ENCODE measurements at regions of chr6 and their contacts with region 1.

Region 1: GRCh38 chr6:44265007-44265721 is at the start of gene NFKBIE:
- DNase-seq: peak; percentile 93
- H3K4me3 Mint-ChIP-seq: peak within 1 kb of the TSS; percentile 98
- H3K27ac Mint-ChIP-seq: peak within 1 kb of the TSS; percentile 95
- H3K4me1 Mint-ChIP-seq: peaks cover 66% of the 10 kb centered on the region
- H3K27me3 Mint-ChIP-seq: peaks cover 15% of the 10 kb centered on the region
- total RNA-seq, gene NFKBIE: 23.2 and 29.0 TPM in 2 replicates

Region 2: GRCh38 chr6:44172731-44173500 is 92.2 kb before region 1 on chr6:
- intact Hi-C with region 1: loop called (anchors 1 kb)
- DNase-seq: peak; percentile 64
- H3K4me3 Mint-ChIP-seq: no peak overlapping the region
- H3K27ac Mint-ChIP-seq: peak overlapping the region; percentile 45
- H3K4me1 Mint-ChIP-seq: peaks cover 12% of the 10 kb centered on the region
- H3K27me3 Mint-ChIP-seq: peaks cover 7% of the 10 kb centered on the region

Region 3: DNA sequence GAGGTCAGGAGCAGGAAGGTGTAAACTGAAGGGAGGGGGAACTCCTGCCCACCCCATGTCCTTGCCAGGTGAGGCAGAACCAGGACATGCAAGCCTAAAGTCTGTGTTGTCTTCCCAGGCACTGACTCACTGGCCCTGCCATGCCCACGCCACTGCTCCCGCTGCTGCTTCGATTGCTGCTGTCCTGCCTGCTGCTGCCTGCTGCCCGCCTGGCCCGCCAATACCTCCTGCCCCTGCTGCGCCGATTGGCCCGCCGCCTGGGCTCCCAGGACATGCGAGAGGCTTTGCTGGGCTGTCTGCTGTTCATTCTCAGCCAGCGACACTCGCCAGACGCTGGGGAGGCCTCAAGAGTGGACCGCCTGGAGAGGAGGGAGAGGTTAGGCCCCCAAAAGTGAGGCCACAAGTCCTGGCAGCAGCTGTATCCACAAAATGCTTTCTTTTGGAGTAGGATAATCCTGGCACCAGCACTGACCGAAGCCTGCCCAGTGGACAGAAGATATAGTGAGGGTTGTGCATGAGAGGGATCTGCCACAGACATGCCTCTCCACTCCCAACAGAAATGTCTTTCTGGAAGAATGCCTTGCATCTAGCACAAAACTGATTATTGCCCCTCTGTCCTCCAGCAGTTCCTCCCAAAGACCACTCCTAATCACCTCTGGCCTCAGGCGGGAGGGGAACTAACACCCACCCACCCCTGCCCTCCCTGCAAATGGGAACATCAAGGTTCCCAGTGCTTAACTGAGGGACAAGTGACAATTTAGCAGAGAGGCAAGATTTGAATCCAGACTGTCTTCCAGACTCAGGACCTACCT is 47.6 kb before region 1 on chr6:
- intact Hi-C with region 1: no loop called
- DNase-seq: no peak
- H3K4me3 Mint-ChIP-seq: no peak overlapping the region
- H3K27ac Mint-ChIP-seq: no peak overlapping the region
- H3K4me1 Mint-ChIP-seq: peaks cover 22% of the 10 kb centered on the region
- H3K27me3 Mint-ChIP-seq: peaks cover 20% of the 10 kb centered on the region

Region 4: DNA sequence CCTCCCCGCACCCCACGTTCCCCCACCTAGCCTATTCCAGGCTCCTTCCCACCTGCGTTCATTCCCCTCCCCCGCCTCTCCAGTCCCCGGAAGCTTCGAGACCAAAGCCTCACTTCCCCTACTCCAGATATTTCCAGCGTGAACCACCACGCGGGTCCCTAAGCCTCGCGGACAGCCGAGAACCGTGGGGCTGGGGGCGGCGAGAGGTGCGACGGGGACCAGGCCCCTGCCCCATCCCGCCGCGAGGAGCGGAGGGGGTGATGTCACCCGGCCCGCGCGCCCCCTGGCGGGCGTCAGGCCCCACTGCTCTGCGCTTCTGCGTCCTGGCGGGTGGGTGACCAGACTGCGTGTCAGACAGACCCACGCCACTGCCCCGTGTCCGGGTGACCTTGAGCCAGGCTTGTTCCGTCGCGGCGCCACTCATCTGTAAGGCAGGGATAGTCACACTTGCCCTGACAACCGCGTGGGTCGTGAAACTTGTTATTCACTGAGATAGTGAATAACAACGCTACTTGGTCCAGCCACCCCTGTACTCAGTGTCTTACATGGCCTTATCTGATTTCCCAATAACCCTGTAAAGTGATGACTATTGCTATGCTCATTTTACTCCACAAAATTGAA is 27.2 kb before region 1 on chr6:
- intact Hi-C with region 1: loop called (anchors 2 kb)
- DNase-seq: peak; percentile 79
- H3K4me3 Mint-ChIP-seq: peak overlapping the region; percentile 82
- H3K27ac Mint-ChIP-seq: peak overlapping the region; percentile 86
- H3K4me1 Mint-ChIP-seq: peaks cover 13% of the 10 kb centered on the region
- H3K27me3 Mint-ChIP-seq: no peaks in the 10 kb centered on the region

Region 5: DNA sequence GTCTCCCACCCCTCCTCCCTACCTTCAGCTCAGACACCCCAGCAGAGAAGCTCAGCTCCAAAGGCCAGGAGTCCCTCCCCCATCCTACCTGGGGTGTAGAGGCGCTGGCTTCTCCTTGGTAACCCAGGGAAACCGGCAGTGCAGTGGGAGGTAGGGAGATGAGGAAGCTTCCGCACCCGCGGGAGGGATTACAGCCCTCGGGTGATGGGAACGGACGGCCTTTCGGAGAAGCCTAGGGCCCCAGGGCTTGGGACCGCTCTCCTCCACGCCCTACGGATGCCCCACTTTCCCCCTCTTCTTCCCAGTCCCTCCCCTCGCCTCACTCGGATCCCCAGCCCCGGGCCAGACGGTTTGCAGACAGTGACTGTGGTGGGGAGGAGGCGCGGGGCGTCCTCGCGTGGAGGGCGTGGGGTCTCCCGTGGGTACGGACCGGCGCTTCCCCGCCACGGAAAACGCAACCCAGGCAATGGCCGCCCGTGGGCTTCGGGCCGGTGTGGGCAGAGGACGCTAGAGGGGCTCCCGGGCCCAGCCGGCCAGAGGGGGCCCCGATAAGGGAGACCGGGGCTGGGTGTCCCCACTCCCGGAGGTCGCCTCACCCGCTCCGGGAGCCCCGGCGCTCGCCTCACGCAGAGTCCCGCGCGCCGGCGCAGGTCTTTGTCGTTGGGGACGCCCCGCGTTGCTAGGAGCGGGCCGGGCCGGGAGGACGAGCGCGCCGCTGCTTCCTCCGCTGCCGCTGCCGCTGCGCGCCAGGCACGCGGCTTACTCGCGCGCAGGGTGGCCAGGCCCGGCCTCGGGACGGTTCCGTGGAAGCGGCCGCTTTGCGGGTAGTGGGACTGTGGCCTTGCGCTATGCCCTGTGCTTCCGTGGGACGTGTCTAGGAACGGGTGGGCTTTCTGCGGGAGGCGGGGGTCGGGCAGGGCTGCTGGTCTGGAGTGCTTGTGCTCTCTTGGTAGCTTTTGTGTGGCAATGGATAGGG is 32.2 kb after region 1 on chr6:
- intact Hi-C with region 1: loop called (anchors 2 kb)
- DNase-seq: peak; percentile 31
- H3K4me3 Mint-ChIP-seq: peak overlapping the region; percentile 39
- H3K27ac Mint-ChIP-seq: no peak overlapping the region
- H3K4me1 Mint-ChIP-seq: no peaks in the 10 kb centered on the region
- H3K27me3 Mint-ChIP-seq: peaks cover 47% of the 10 kb centered on the region

Region 6: DNA sequence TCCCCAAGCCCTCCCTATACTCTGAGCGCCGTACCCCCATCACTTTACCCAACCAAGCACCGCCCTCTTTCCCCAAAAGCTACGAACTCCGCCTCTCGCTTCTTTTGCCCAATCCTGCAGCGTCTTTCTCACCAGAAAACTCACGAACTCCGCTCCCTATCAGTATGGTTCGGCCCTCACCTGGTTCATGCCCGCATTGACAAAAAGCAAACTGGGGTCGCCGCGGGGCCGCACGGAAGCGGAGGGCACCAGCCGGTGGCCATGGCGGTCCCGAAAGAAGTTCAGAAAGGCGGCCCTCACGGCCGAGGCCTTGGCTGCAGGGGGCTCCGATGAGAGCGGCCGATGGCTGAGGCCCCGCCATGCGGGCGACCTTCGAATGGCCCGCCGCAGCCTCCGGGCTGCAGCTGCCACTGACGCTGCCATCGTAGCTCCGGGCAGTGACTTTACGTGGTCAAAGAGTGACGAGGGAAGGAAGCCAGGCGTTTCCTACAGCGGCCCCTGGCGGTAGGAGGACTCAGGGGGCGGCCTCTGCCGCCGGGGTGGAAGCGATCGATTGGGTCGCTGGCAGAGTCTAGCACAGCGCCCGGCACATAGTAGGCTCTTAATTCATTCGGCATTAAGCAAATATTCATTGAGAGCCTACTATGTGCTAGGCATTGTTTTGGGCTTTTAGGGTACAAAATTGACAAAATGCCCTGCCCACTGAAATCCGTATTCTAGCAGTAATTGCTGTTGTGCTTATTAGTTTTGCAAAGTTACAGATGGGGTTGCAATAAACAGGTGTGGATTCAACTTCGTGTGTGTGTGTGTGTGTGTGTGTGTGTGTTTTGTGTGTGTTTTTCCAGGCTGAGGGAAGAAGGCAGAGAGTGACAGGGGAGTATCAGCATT is 48.0 kb after region 1 on chr6 and contains the start of gene AARS2:
- intact Hi-C with region 1: loop called (anchors 1 kb)
- DNase-seq: peak; percentile 89
- H3K4me3 Mint-ChIP-seq: peak within 1 kb of the TSS; percentile 99
- H3K27ac Mint-ChIP-seq: peak within 1 kb of the TSS; percentile 94
- H3K4me1 Mint-ChIP-seq: peaks cover 18% of the 10 kb centered on the region
- H3K27me3 Mint-ChIP-seq: peaks cover 13% of the 10 kb centered on the region
- total RNA-seq, gene AARS2: 22.2 and 23.0 TPM in 2 replicates

Region 7: GRCh38 chr6:44387346-44388133 is 122.4 kb after region 1 on chr6 and contains the start of gene CDC5L:
- intact Hi-C with region 1: loop called (anchors 1 kb)
- DNase-seq: peak; percentile 93
- H3K4me3 Mint-ChIP-seq: peak within 1 kb of the TSS; percentile 97
- H3K27ac Mint-ChIP-seq: peak within 1 kb of the TSS; percentile 99
- H3K4me1 Mint-ChIP-seq: peaks cover 40% of the 10 kb centered on the region
- H3K27me3 Mint-ChIP-seq: peaks cover 3% of the 10 kb centered on the region
- total RNA-seq, gene CDC5L: 28.1 and 28.4 TPM in 2 replicates

Region 8: GRCh38 chr6:44667668-44668390 is 402.7 kb after region 1 on chr6:
- intact Hi-C with region 1: no loop called
- DNase-seq: no peak
- H3K4me3 Mint-ChIP-seq: no peak overlapping the region
- H3K27ac Mint-ChIP-seq: no peak overlapping the region
- H3K4me1 Mint-ChIP-seq: no peaks in the 10 kb centered on the region
- H3K27me3 Mint-ChIP-seq: peaks cover 2% of the 10 kb centered on the region

Measured in activated T-helper 1 cell treated with anti-CD3 and anti-CD28 coated beads, Interleukin-12 subunit alpha, Interleukin-12 subunit beta, Interleukin-2, Interleukin-4 antibody, amounts not matched to agents 30 ng/mL and 10 ng/mL and 1 ng/mL, durations not matched to agents 14 hours and 24 hours and 36 hours (primary cell).